Activated T-helper 2 cell treated with anti-CD3 and anti-CD28 coated beads, Interferon-gamma antibody, Interleukin-2, Interleukin-4, amounts not matched to agents 10 μg/mL and 5 μg/mL and 100 μg/mL, durations not matched to agents 14 hours and 24 hours and 36 hours (primary cell): ENCODE measurements at regions of chr1 and their contacts with region 1.

Region 1: DNA sequence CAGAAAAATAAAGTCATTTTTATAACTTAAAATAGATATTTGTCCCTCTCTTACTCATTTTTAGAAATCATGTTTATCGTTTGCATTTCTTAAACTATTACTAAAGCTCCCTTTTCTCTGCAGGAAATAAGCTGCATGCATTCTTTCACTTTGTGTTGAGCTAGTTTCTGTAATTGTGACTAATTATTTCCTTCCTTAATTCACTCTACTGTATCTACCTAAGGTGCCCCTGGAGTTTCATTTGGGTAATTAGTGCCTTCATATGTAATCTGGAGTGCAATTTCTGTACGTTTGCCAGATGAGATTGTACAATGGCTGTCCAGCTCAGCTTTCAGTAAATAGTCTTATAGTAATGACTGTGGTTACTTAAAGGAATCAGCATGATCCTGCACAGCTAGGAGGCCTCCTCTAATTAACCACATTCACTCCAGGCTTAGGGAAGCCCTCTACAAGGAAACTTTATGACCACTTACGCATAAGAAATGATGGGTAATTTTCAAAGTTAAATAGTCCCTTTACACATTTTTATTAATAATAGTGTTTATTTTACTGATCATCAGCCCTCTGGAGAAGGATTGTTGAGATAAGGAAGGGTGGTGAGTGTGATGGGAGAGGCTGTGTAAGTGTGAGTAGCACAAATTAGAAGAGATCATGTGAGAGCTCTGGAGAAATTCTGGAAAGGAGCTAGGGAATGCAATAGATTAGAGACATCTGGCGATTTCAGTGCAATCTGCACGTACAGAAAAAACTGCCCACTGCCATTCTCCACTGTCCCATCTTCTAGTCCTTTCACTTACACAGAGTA is 86.8 kb downstream of the LRRC8C start:
- DNase-seq: no peak
- H3K4me3 Mint-ChIP-seq: peak overlapping the region; percentile 75
- H3K27ac Mint-ChIP-seq: peak overlapping the region; percentile 99
- H3K4me1 Mint-ChIP-seq: peaks cover 82% of the 10 kb centered on the region
- H3K27me3 Mint-ChIP-seq: no peaks in the 10 kb centered on the region

Region 2: GRCh38 chr1:89524369-89525168 is 195.1 kb before region 1 on chr1 and contains the start of gene LRRC8B:
- intact Hi-C with region 1: loop called (anchors 1 kb)
- DNase-seq: peak; percentile 91
- H3K4me3 Mint-ChIP-seq: no peak within 1 kb of the TSS
- H3K27ac Mint-ChIP-seq: no peak within 1 kb of the TSS
- H3K4me1 Mint-ChIP-seq: peaks cover 35% of the 10 kb centered on the region
- H3K27me3 Mint-ChIP-seq: no peaks in the 10 kb centered on the region
- total RNA-seq, gene LRRC8B: 48.2 and 48.7 TPM in 2 replicates

Region 3: DNA sequence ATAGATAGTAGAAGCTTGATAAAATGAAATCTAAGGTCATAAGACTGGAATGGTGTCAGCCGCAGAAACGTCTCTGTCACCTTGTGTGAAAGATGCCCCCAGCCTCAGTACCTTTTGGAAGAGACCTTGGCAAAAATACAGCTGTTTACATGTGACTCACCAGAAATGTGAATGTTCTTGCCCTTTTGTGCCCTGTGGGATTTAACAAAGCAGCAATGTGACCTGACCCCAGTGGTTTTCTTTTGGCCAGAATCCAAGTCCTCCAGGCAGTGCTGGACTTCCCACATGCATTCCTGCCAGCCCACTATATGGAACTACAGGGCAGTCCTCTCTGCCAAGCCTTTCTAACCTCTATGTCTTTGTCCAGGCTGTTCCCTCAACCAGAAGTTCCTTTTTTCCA is 114.0 kb before region 1 on chr1:
- intact Hi-C with region 1: loop called (anchors 1 kb)
- DNase-seq: no peak
- H3K4me3 Mint-ChIP-seq: peak overlapping the region; percentile 5
- H3K27ac Mint-ChIP-seq: peak overlapping the region; percentile 99
- H3K4me1 Mint-ChIP-seq: peaks cover 90% of the 10 kb centered on the region
- H3K27me3 Mint-ChIP-seq: no peaks in the 10 kb centered on the region

Region 4: DNA sequence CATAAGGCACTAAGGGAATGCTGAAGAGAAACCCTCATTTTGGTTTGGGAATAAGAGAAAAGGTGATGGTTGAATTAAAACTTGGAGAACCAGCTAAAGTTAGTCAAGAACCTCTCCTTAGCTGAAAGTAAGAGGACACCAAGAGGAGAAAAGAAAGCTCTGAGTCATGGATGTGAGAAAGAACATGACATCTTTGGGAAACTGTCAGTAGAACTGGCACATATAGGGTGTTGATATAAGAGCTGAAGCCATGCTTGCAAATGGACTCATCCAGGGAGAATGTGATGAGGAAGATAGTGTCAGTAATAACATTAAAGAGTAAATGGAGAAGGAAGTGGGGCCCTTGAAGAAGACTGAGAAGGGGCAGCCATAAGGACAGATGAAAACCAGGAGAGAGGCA is 32.5 kb before region 1 on chr1:
- intact Hi-C with region 1: loop called (anchors 1 kb)
- DNase-seq: no peak
- H3K4me3 Mint-ChIP-seq: no peak overlapping the region
- H3K27ac Mint-ChIP-seq: peak overlapping the region; percentile 70
- H3K4me1 Mint-ChIP-seq: peaks cover 66% of the 10 kb centered on the region
- H3K27me3 Mint-ChIP-seq: no peaks in the 10 kb centered on the region

Region 5: DNA sequence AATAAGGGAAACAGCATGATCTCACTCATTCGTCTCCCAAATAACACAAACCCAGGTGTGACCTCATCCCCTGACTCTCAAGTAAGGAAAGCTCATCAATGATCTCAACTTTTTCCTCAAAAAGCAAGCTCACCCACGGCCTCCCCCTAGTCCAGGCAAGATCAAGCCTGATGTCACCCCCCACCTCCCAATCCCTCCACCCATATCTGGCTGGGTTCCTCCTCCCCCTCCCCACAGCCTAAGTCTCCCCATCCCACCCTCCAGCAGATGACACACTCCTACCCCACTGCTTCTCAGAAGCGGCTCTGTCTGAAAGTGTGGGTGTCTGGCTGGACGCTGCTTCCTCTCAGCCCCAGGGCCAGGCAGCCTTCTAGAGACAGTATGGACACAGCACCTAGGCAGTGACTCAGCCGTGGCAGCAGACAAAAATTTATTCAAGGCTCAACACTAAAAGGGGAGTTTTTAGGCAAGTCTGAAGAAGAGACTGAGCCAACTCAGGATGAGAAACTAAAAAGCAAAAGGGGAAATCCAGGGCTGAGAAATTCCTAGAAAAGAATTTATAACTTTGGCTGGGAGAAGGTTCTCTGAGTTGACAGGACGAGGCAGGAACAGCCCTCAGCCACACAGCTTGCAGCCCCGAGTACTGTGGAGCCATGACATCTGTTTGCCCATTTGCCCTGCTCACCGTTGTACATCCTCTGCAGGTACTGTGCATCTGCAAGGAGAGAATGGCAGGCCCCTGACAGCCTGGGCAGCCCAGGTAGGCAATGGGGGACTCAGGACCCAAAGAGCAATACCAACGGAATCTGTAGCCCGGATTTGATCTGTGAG is 19.5 kb after region 1 on chr1:
- intact Hi-C with region 1: loop called (anchors 1 kb)
- DNase-seq: no peak
- H3K4me3 Mint-ChIP-seq: peak overlapping the region; percentile 74
- H3K27ac Mint-ChIP-seq: peak overlapping the region; percentile 94
- H3K4me1 Mint-ChIP-seq: peaks cover 40% of the 10 kb centered on the region
- H3K27me3 Mint-ChIP-seq: no peaks in the 10 kb centered on the region

Region 6: GRCh38 chr1:89994805-89995597 is 275.3 kb after region 1 on chr1 and contains the start of gene ZNF326:
- intact Hi-C with region 1: loop called (anchors 5 kb)
- DNase-seq: peak; percentile 92
- H3K4me3 Mint-ChIP-seq: peak within 1 kb of the TSS; percentile 98
- H3K27ac Mint-ChIP-seq: peak within 1 kb of the TSS; percentile 98
- H3K4me1 Mint-ChIP-seq: peaks cover 41% of the 10 kb centered on the region
- H3K27me3 Mint-ChIP-seq: peaks cover 5% of the 10 kb centered on the region
- total RNA-seq, gene ZNF326: 32.8 and 33.1 TPM in 2 replicates